ENCODE measurements at regions of chr4 and their contacts with region 1.

Region 1: GRCh38 chr4:118981839-118982381 is 93.3 kb downstream of the SYNPO2 start:
- DNase-seq: peak; percentile 56
- ATAC-seq: peak; percentile 94
- H3K4me3 ChIP-seq: no peak overlapping the region
- H3K27ac ChIP-seq: no peak overlapping the region
- H3K4me1 ChIP-seq: no peaks in the 10 kb centered on the region
- H3K27me3 ChIP-seq: peaks cover 0 to 3% of the 10 kb centered on the region in 2 experiments; a peak in 1 of 5 replicates
- CTCF ChIP-seq: peak; percentile 86
- EP300 ChIP-seq: no peak
- POLR2A ChIP-seq: no peak
- RAD21 ChIP-seq: peak; percentile 78

Region 2: GRCh38 chr4:118997601-118998000 is 15.7 kb after region 1 on chr4:
- CTCF ChIA-PET with region 1: no interaction called
- POLR2A ChIA-PET with region 1: no interaction called
- in situ Hi-C with region 1: no loop called
- intact Hi-C with region 1: no loop called
- DNase-seq: no peak
- ATAC-seq: no peak
- H3K4me3 ChIP-seq: no peak overlapping the region
- H3K27ac ChIP-seq: no peak overlapping the region
- H3K4me1 ChIP-seq: no peaks in the 10 kb centered on the region
- H3K27me3 ChIP-seq: no peaks in the 10 kb centered on the region
- CTCF ChIP-seq: no peak
- EP300 ChIP-seq: no peak
- POLR2A ChIP-seq: no peak
- RAD21 ChIP-seq: no peak

Region 3: GRCh38 chr4:119286377-119287002 is 304.6 kb after region 1 on chr4:
- CTCF ChIA-PET with region 1: interaction called, 15 read pairs
- POLR2A ChIA-PET with region 1: no interaction called
- in situ Hi-C with region 1: loop called (anchors 10 kb)
- intact Hi-C with region 1: loop called (anchors 1 kb)
- DNase-seq: peak; percentile 32
- ATAC-seq: no peak
- H3K4me3 ChIP-seq: no peak overlapping the region
- H3K27ac ChIP-seq: no peak overlapping the region
- H3K4me1 ChIP-seq: peaks cover 9% of the 10 kb centered on the region
- H3K27me3 ChIP-seq: no peaks in the 10 kb centered on the region
- CTCF ChIP-seq: peak; percentile 27
- EP300 ChIP-seq: no peak
- POLR2A ChIP-seq: no peak
- RAD21 ChIP-seq: no peak; the same call in 1 of the 2 replicates

Region 4: DNA sequence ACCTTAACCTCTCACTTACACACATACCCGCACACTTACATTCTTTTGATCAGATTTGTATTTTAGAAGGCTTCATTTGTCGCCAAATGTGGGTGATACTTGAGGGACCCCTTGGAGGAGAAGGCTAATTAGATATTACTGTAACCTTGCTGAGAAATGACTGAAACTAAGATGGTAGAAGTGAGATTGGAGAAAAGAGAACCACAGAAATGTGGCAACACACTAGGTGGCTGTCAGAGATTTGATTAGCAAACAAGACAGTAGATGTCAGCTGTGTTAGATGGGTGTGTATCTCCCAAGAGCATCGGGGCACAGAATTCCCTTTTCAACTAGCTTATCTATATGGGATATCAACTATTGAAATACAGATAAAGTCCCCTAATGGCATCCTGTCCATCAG is 489.3 kb after region 1 on chr4:
- CTCF ChIA-PET with region 1: no interaction called
- POLR2A ChIA-PET with region 1: no interaction called
- in situ Hi-C with region 1: loop called (anchors 25 kb)
- intact Hi-C with region 1: loop called (anchors 5 kb)
- DNase-seq: no peak
- ATAC-seq: no peak
- H3K4me3 ChIP-seq: no peak overlapping the region
- H3K27ac ChIP-seq: no peak overlapping the region
- H3K4me1 ChIP-seq: no peaks in the 10 kb centered on the region
- H3K27me3 ChIP-seq: no peaks in the 10 kb centered on the region
- CTCF ChIP-seq: no peak
- EP300 ChIP-seq: no peak
- POLR2A ChIP-seq: no peak
- RAD21 ChIP-seq: no peak

Region 5: DNA sequence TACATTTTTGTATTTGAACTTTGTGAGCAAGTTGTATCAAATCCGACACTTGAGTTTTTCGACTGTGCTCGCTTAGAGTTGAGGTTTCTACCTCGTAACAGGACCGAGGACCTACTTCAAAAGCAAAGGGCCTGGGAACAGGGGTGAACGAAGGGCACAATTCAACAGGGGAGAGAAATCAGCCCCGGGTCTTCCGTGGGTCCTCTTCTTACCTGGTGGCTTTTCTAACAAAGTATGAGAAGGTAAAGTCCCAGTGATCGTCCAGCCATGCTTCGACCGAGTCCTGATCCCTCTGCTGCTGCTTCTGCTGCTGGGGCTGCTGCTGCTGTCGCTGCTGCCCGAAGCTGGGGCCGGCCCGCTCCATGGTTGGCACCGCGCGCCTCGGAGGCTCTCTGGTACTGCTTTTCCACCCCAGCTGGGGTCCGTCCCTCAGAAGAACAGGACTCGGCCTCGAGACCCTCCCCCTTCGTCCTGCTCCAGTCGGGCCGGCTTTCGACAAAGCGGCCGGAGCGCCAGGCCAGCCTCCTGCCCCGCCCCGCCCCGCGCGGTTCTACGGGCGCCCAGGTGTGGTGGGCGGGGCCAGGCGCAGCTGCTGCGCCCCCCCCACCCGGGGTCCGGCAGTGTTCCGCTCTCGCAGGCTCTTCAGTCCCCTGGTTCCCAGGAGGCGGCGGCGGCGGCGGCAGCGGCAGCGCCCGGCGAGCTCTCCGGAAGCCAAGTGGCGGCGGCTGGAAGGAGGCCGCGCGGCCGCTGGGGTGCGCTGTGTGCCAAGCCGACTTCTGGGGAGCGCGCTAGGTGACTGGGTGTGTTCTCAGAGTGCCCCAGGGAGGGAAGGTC is 646.6 kb after region 1 on chr4 and contains the start of gene PDE5A:
- CTCF ChIA-PET with region 1: interaction called, 6 read pairs
- POLR2A ChIA-PET with region 1: no interaction called
- in situ Hi-C with region 1: loop called (anchors 25 kb)
- intact Hi-C with region 1: no loop called
- DNase-seq: peak; percentile 46
- ATAC-seq: peak; percentile 92
- H3K4me3 ChIP-seq: peak within 1 kb of the TSS; percentile 67 to 74 (median 73)
- H3K27ac ChIP-seq: no peak within 1 kb of the TSS
- H3K4me1 ChIP-seq: peaks cover 28% of the 10 kb centered on the region
- H3K27me3 ChIP-seq: peaks cover 4 to 21% of the 10 kb centered on the region in 2 experiments; a peak in 4 of 5 replicates
- CTCF ChIP-seq: peak; percentile 86
- EP300 ChIP-seq: no peak
- POLR2A ChIP-seq: no peak
- RAD21 ChIP-seq: peak; percentile 88
- total RNA-seq, gene PDE5A: 0.44 and 0.53 TPM in 2 replicates

Measured in HepG2 (cell line).